Heart right ventricle (tissue), 16 donors: ENCODE measurements at regions of chr22 and their contacts with region 1.

Region 1: DNA sequence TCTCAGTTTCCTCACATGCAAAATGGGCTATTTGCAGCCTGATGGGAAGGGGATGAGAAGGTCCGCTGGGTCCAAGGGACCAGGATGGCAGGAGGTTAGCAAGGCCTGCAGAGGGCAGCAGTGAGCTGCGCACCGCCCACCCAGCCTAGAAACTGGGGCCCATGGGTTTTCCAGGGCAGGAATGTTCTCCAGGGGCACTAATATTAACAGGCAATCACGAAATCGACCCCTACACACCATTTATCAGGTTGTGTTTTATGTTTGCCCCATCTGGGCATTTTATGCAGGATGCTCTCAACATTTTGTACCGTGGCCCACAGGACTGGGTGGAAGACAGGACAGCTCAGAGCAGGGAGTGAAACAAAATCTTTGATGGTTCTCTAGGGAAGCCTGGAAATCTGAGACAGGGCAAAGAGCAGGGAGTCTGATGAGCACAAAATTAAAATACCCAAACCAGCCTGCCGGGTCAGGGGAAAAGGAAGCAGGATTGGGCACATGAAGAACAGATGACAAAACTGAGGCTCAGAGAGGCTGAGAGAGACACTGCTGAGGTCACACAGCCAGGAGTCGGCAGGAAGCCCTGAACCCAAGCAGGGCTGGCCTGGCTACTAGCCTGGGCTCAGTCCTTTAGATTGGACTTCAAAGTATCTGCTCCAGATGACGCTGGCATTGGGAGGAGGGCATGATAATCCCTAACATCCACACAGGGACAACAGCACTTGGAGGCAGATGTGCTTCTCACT is 1.6 kb upstream of the BCR start:
- DNase-seq: peak; percentile 60 to 74
- ATAC-seq: peak; percentile 43 to 80 (median 67)
- H3K4me3 ChIP-seq: peak overlapping the region in 1 of 10 donors; percentile 64
- H3K27ac ChIP-seq: peak overlapping the region in 2 of 10 donors; percentile 67 to 71
- H3K4me1 ChIP-seq: peaks cover 9 to 45% (median 41%) of the 10 kb centered on the region in 9 donors
- H3K27me3 ChIP-seq: no peaks in the 10 kb centered on the region
- CTCF ChIP-seq: peak; percentile 93 to 99 (median 97)

Region 2: GRCh38 chr22:23113067-23113846 is 65.4 kb before region 1 on chr22:
- intact Hi-C with region 1: no loop called
- DNase-seq: peak; percentile 18 to 41
- ATAC-seq: peak in 4 of 8 donors; percentile 26 to 50 (median 45)
- H3K4me3 ChIP-seq: no peak overlapping the region
- H3K27ac ChIP-seq: no peak overlapping the region
- H3K4me1 ChIP-seq: peaks cover 0 to 43% (median 17%) of the 10 kb centered on the region in 9 donors
- H3K27me3 ChIP-seq: peaks cover 0 to 5% (median 0%) of the 10 kb centered on the region in 7 donors
- CTCF ChIP-seq: no peak

Region 3: GRCh38 chr22:23225724-23226496 is 47.2 kb after region 1 on chr22:
- intact Hi-C with region 1: loop called in 6 of 10 experiments (anchors 5 to 10 kb)
- DNase-seq: peak; percentile 49 to 56
- ATAC-seq: peak in 7 of 8 donors; percentile 36 to 83 (median 78)
- H3K4me3 ChIP-seq: no peak overlapping the region
- H3K27ac ChIP-seq: peak overlapping the region; percentile 54 to 81 (median 77)
- H3K4me1 ChIP-seq: peaks cover 23 to 71% (median 59%) of the 10 kb centered on the region in 9 donors
- H3K27me3 ChIP-seq: no peaks in the 10 kb centered on the region
- CTCF ChIP-seq: no peak

Region 4: GRCh38 chr22:23240639-23241389 is 62.1 kb after region 1 on chr22:
- intact Hi-C with region 1: loop called in 4 of 10 experiments (anchors 5 to 10 kb)
- DNase-seq: no peak
- ATAC-seq: no peak
- H3K4me3 ChIP-seq: no peak overlapping the region
- H3K27ac ChIP-seq: no peak overlapping the region
- H3K4me1 ChIP-seq: peaks cover 17 to 66% (median 28%) of the 10 kb centered on the region in 9 donors
- H3K27me3 ChIP-seq: no peaks in the 10 kb centered on the region
- CTCF ChIP-seq: peak in 5 of 9 donors; percentile 31 to 47 (median 44)

Region 5: DNA sequence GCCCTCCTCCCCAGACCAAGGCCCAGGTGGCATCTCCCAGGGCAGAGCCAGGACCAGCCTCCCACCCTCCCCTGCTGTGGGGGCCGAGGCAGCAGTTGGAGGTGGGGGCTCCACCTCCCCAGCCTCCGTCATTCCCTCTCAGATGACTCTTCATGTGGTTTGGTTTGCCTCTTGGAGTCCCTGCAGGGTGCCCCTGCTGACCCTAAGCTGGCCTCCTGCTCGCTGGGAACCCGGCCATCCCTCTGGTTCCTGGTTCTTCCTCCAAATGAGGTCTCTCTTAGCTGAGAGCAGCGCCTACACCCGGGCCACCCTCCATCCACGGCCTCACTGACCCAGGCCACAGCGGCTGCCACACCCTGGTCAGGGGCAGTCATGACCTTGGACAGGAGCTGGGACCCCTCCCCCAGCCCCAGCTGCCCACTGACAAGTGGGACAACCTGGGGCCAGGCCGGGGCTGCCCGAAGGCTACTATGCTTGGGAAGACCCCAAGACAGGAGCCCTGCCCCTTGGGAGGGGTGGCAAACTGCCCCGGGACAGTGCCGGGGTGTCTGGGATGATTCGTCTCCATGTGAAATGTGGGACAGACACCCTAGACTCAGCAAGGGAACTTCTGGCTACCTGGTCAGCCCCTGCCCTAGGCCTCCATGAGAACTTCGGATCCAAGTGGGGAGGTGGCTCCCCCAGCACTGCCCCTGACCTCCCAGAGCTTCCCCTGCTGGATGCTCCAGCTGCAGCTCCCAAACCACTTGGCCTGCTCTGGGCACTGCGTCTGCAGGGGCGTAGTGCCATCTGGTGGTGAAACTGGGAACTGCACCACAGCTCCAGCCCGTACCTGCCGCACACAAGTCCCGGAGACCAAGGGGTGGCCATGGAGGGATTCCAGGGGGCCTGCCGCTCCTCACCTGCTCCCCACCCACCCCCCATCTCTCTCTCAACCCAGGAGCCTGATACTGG is 206.9 kb after region 1 on chr22:
- intact Hi-C with region 1: loop called in 8 of 10 experiments (anchors 2 to 10 kb)
- DNase-seq: peak; percentile 73 to 85
- ATAC-seq: peak; percentile 80 to 91 (median 85)
- H3K4me3 ChIP-seq: no peak overlapping the region
- H3K27ac ChIP-seq: no peak overlapping the region
- H3K4me1 ChIP-seq: peaks cover 0 to 7% (median 0%) of the 10 kb centered on the region in 9 donors
- H3K27me3 ChIP-seq: peaks cover 0 to 11% (median 3%) of the 10 kb centered on the region in 7 donors
- CTCF ChIP-seq: peak; percentile 96 to 100 (median 99)